ENCODE measurements at regions of chr12 and their contacts with region 1.

Region 1: DNA sequence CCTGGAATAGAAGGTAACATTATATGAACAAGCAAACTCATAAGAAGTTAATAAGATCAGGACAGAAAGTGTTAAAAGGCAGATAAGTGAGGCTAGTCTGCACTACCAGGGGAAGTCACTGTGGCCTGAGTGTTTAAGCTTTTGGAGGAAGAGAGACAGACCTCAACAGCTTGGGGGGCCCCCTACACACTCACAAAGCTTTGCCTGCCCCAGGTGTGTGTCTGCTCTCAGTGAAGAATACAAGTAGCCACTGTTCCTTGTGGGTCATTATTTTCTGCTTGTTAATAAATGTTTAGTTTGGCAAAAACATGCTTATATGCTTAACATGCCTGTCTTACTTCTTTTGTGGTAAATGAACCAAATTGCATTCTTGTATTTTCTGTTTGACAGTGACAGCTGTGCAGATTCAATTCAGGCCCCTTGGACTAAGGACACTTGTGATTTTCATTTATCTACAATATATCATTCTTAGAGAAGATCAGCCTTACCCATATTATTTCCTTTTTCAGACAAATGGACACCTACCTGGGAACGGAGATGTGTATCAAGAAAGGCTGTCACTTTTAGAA is 50.7 kb upstream of the C12orf71 start:
- DNase-seq: no peak
- H3K4me3 ChIP-seq: no peak overlapping the region
- H3K4me1 ChIP-seq: no peaks in the 10 kb centered on the region
- H3K27me3 ChIP-seq: no peaks in the 10 kb centered on the region; the same call in 1 of the 2 replicates

Region 2: GRCh38 chr12:27034607-27035293 is 98.4 kb before region 1 on chr12:
- in situ Hi-C with region 1: loop called (anchors 10 kb)
- DNase-seq: no peak
- H3K4me3 ChIP-seq: no peak overlapping the region
- H3K4me1 ChIP-seq: no peaks in the 10 kb centered on the region
- H3K27me3 ChIP-seq: no peaks in the 10 kb centered on the region